Cardiac septum (tissue), 1 donor: ENCODE measurements at regions of chr3 and their contacts with region 1.

Region 1: DNA sequence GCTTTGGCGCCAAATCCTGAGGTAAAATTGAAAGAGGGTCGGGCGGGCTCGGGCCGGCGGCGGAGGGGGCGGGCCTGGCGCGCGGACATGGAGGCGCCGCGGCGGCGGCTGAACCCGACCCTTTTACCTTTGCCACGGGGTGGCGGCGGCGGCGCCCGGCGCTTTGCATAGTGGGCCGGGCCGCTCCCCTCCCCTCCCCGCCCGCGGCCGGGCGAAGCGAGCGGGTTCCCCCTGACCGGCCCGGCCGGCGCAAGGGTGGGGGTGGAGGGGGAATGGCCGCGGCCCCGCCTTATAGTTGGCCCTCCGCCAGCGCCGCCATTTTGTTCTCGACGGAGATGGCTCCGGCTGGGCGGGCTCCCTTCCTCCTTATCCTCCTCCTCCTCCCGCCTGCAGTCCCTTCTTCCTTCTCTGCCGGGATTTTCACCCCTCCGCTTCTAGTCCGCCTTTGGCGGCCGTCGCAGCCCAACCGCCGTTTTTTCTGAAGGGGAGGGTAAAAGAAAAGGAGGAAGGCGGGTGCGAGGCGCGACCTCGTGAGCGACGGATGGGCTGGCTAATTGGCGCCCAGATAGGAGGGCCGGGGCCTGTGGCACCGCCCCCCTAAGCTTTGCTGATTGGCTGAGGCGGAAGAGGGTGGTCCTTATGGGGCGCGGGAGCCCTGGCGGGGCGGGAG is 638 bp downstream of the NR2C2 start:
- DNase-seq: peak; percentile 99

Region 2: DNA sequence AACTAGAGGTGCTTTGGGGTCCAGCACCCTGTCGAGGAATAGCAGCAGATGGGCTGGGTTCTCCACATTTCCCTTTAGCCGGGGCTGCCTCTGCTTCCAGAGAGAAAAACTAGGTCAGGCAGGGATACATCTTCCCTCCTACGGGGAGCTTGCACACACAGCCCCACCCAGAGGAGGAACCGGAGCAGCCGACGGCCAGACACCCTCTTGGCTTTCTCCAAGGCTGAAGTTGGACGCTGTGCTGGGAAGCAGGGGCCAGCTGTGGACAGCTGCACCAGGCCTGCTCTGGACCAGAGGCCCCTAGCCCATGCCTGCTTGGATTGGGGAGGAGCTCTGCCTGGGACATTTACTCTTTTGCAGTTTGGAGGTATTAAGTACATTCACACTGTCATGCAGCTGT is 45.3 kb before region 1 on chr3:
- intact Hi-C with region 1: no loop called
- DNase-seq: no peak

Region 3: GRCh38 chr3:14989943-14990779 is 42.1 kb after region 1 on chr3:
- intact Hi-C with region 1: loop called (anchors 5 kb)
- DNase-seq: no peak

Region 4: GRCh38 chr3:15405448-15406050 is 457.5 kb after region 1 on chr3:
- intact Hi-C with region 1: no loop called
- DNase-seq: no peak

Region 5: GRCh38 chr3:16048435-16049318 is 1100.7 kb after region 1 on chr3:
- intact Hi-C with region 1: no loop called
- DNase-seq: no peak